ENCODE measurements at regions of chr14 and their contacts with region 1.

Region 1: GRCh38 chr14:71320107-71320733 is 413.0 kb downstream of the PCNX1 start:
- DNase-seq: peak; percentile 90
- ATAC-seq: peak; percentile 78
- H3K4me3 Mint-ChIP-seq: peak within 1 kb of the TSS; percentile 95
- H3K27ac Mint-ChIP-seq: peak within 1 kb of the TSS; percentile 97
- H3K4me1 Mint-ChIP-seq: peaks cover 43% of the 10 kb centered on the region
- H3K27me3 Mint-ChIP-seq: no peaks in the 10 kb centered on the region
- CTCF ChIP-seq: no peak

Region 2: GRCh38 chr14:71103662-71104484 is 216.3 kb before region 1 on chr14:
- CTCF ChIA-PET with region 1: interaction called, 5 read pairs
- POLR2A ChIA-PET with region 1: no interaction called
- intact Hi-C with region 1: loop called (anchors 1 kb)
- DNase-seq: no peak
- ATAC-seq: peak; percentile 73
- H3K4me3 Mint-ChIP-seq: no peak overlapping the region
- H3K27ac Mint-ChIP-seq: no peak overlapping the region
- H3K4me1 Mint-ChIP-seq: no peaks in the 10 kb centered on the region
- H3K27me3 Mint-ChIP-seq: no peaks in the 10 kb centered on the region
- CTCF ChIP-seq: peak; percentile 94

Region 3: GRCh38 chr14:71300566-71301330 is 19.5 kb before region 1 on chr14:
- CTCF ChIA-PET with region 1: no interaction called
- POLR2A ChIA-PET with region 1: no interaction called
- intact Hi-C with region 1: no loop called
- DNase-seq: no peak
- ATAC-seq: no peak
- H3K4me3 Mint-ChIP-seq: no peak overlapping the region
- H3K27ac Mint-ChIP-seq: no peak overlapping the region
- H3K4me1 Mint-ChIP-seq: no peaks in the 10 kb centered on the region
- H3K27me3 Mint-ChIP-seq: no peaks in the 10 kb centered on the region
- CTCF ChIP-seq: no peak

Region 4: DNA sequence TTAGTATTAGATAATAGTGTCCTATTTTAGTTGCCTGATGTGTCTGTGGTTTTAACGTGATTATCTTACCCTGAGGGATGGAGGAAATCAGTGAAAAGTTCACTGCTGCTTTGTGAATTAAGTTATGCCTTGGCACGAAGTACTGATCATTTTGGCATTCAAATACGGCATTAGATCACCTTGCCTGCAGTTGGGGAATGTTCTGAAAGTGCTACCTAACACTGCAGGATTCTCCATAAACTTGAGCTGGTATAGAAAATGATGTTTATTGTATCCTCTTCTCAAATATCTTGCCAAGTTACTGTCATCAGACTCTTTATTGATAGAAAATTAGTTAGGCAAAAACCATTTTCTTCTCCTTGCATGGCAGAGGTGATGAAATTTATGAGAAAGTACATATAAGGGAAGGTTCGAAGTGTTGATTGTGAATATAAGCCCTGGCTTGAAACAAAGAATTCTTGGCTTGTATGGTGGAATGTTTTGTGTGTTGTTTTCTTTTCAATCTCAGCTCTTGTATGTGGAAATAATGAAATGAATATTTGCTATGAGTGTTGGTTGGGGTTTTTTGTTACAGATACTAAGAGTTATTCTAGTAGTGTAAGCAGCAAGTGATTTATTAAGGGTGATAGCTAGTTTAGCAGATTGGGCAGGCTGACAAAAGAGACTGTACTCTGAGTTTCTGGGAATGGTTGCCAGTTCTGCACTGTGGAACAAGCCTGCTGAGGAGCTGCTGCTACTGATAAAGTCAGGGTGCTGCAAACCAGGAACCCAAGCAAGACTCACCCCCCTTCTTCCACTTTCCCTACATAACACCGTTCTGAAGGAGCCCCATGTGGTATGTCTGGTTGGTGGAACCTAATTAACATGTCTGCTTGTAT is 35.3 kb after region 1 on chr14:
- CTCF ChIA-PET with region 1: interaction called, 4 read pairs
- POLR2A ChIA-PET with region 1: interaction called, 37 read pairs
- intact Hi-C with region 1: loop called (anchors 1 kb)
- DNase-seq: no peak
- ATAC-seq: peak; percentile 19
- H3K4me3 Mint-ChIP-seq: peak overlapping the region; percentile 54
- H3K27ac Mint-ChIP-seq: peak overlapping the region; percentile 87
- H3K4me1 Mint-ChIP-seq: peaks cover 85% of the 10 kb centered on the region
- H3K27me3 Mint-ChIP-seq: no peaks in the 10 kb centered on the region
- CTCF ChIP-seq: no peak

Region 5: GRCh38 chr14:71403656-71404055 is 83.4 kb after region 1 on chr14:
- CTCF ChIA-PET with region 1: interaction called, 208 read pairs
- POLR2A ChIA-PET with region 1: interaction called, 164 read pairs
- intact Hi-C with region 1: loop called (anchors 1 kb)
- DNase-seq: no peak
- ATAC-seq: peak; percentile 54
- H3K4me3 Mint-ChIP-seq: no peak overlapping the region
- H3K27ac Mint-ChIP-seq: peak overlapping the region; percentile 76
- H3K4me1 Mint-ChIP-seq: peaks cover 61% of the 10 kb centered on the region
- H3K27me3 Mint-ChIP-seq: no peaks in the 10 kb centered on the region
- CTCF ChIP-seq: no peak

Region 6: GRCh38 chr14:71555654-71556559 is 235.7 kb after region 1 on chr14:
- CTCF ChIA-PET with region 1: interaction called, 3 read pairs
- POLR2A ChIA-PET with region 1: interaction called, 13 read pairs
- intact Hi-C with region 1: loop called (anchors 1 kb)
- DNase-seq: no peak
- ATAC-seq: peak; percentile 94
- H3K4me3 Mint-ChIP-seq: peak overlapping the region; percentile 79
- H3K27ac Mint-ChIP-seq: peak overlapping the region; percentile 97
- H3K4me1 Mint-ChIP-seq: peaks cover 76% of the 10 kb centered on the region
- H3K27me3 Mint-ChIP-seq: no peaks in the 10 kb centered on the region
- CTCF ChIP-seq: no peak

Region 7: DNA sequence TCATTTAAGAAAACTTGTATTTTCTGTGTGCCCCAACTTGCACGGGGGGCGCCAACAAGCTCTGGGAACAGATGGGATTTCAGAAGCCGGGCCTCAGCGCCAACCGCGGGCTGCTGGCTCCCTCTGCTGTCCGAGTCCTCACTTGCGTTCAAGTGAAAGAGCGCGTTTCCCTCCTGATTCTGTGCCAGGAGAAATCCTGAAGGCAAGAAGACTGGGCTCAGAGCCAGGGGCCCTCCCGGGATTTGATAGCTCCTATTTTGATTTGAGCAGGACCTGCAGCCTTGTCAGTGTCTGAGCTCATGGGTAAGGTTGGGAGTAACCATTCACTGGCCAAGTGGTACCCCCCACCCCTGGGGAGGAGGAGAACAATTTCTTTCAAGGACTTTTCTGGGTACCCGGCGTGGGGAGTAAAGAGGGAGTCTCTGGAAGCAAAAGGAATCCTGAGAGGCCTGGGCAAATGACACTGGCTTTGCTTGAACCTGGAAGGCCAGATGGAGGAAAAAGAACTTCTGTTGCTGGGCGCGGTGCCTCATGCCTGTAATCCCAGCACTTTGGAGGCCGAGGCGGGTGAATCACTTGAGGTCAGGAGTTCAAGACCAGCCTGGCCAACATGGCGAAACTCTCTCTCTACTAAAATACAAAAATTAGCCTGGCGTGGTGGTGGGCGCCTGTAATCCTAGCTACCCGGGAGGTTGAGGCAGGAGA is 433.1 kb after region 1 on chr14:
- CTCF ChIA-PET with region 1: interaction called, 13 read pairs
- POLR2A ChIA-PET with region 1: no interaction called
- intact Hi-C with region 1: loop called (anchors 1 kb)
- DNase-seq: peak; percentile 61
- ATAC-seq: peak; percentile 45
- H3K4me3 Mint-ChIP-seq: no peak overlapping the region
- H3K27ac Mint-ChIP-seq: no peak overlapping the region
- H3K4me1 Mint-ChIP-seq: peaks cover 3% of the 10 kb centered on the region
- H3K27me3 Mint-ChIP-seq: peaks cover 4% of the 10 kb centered on the region
- CTCF ChIP-seq: peak; percentile 49

Measured in activated B cell treated with CpG ODN at 0.5 μM for 24 hours (primary cell).